PC-9 (cell line): ENCODE measurements at regions of chrX and their contacts with region 1.

Region 1: DNA sequence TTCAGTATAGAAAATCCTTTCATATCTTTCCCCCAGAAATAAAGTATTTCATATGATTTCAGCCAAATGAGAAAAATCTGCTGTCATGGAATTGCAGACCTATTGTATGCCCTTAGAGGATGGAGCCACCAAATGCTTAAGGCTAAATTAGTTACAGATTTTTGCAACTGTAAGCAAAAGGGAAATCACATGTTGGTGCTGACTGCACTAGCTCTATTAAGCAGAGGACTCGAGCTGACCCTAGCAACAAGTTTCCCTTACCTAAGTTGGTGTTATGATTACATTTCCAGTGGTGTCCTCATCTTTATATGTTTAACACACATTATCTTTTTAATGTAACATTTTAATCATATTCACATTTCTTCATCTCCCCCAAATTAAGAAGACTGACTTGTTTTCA is 58.3 kb upstream of the DOCK11 start:
- DNase-seq: no peak
- H3K4me3 ChIP-seq: no peak overlapping the region
- H3K27ac ChIP-seq: no peak overlapping the region
- H3K4me1 ChIP-seq: no peaks in the 10 kb centered on the region
- H3K27me3 ChIP-seq: no peaks in the 10 kb centered on the region
- CTCF ChIP-seq: no peak

Region 2: DNA sequence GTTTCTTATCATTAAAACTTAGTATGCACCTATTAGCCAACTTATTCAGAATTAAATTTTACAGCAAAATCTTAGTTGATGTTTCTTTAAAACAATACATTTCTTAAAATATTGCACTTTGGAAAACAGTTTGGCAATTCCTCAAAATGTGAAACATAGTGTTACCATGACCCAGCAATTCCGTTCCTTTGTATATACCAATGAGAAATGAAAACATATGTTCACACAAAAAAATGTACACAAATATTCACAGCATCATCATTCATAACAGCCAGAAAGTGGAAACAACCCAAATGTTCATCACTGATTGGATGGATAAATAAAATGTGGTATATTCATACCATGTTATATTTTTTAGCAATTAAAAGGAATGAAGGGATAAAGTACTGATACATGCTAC is 41.2 kb before region 1 on chrX:
- CTCF ChIA-PET with region 1: no interaction called
- POLR2A ChIA-PET with region 1: interaction called, 9 read pairs
- intact Hi-C with region 1: loop called (anchors 5 kb)
- DNase-seq: no peak
- H3K4me3 ChIP-seq: no peak overlapping the region
- H3K27ac ChIP-seq: no peak overlapping the region
- H3K4me1 ChIP-seq: no peaks in the 10 kb centered on the region
- H3K27me3 ChIP-seq: no peaks in the 10 kb centered on the region
- CTCF ChIP-seq: no peak

Region 3: GRCh38 chrX:118484220-118484903 is 47.1 kb after region 1 on chrX:
- CTCF ChIA-PET with region 1: no interaction called
- POLR2A ChIA-PET with region 1: interaction called, 17 read pairs
- intact Hi-C with region 1: no loop called
- DNase-seq: peak; percentile 59 to 83
- H3K4me3 ChIP-seq: peak overlapping the region; percentile 46; the same call in 1 of the 2 replicates
- H3K27ac ChIP-seq: peak overlapping the region; percentile 90
- H3K4me1 ChIP-seq: peaks cover 19% of the 10 kb centered on the region
- H3K27me3 ChIP-seq: no peaks in the 10 kb centered on the region
- CTCF ChIP-seq: no peak

Region 4: GRCh38 chrX:118780911-118781310 is 343.6 kb after region 1 on chrX:
- CTCF ChIA-PET with region 1: no interaction called
- POLR2A ChIA-PET with region 1: no interaction called
- intact Hi-C with region 1: no loop called
- DNase-seq: no peak
- H3K4me3 ChIP-seq: no peak overlapping the region
- H3K27ac ChIP-seq: no peak overlapping the region
- H3K4me1 ChIP-seq: no peaks in the 10 kb centered on the region
- H3K27me3 ChIP-seq: no peaks in the 10 kb centered on the region
- CTCF ChIP-seq: no peak